Naive thymus-derived CD4-positive, alpha-beta T cell (primary cell): ENCODE measurements at regions of chr12 and their contacts with region 1.

Region 1: GRCh38 chr12:55955800-55956508 is 9.9 kb downstream of the PMEL start:
- DNase-seq: peak in 4 of 9 donors; percentile 41 to 47 (median 44)
- ATAC-seq: peak; percentile 71
- H3K4me3 ChIP-seq: no peak overlapping the region
- H3K4me3 Mint-ChIP-seq: peak overlapping the region in 1 of 10 donors; percentile 21
- H3K27ac ChIP-seq: peak overlapping the region; percentile 22
- H3K27ac Mint-ChIP-seq: peak overlapping the region; percentile 6 to 90 (median 78)
- H3K4me1 ChIP-seq: peaks cover 4 to 8% of the 10 kb centered on the region in 2 donors
- H3K4me1 Mint-ChIP-seq: peaks cover 12 to 38% (median 21%) of the 10 kb centered on the region in 7 donors
- H3K27me3 ChIP-seq: no peaks in the 10 kb centered on the region
- H3K27me3 Mint-ChIP-seq: no peaks in the 10 kb centered on the region

Region 2: GRCh38 chr12:55940065-55940732 is 15.8 kb before region 1 on chr12:
- CTCF ChIA-PET with region 1: interaction called, 5 read pairs
- POLR2A ChIA-PET with region 1: interaction called, 728 read pairs
- intact Hi-C with region 1: loop called in 1 of 2 experiments (anchors 2 kb)
- DNase-seq: peak; percentile 62 to 88 (median 82)
- ATAC-seq: peak; percentile 98
- H3K4me3 ChIP-seq: no peak overlapping the region
- H3K4me3 Mint-ChIP-seq: peak overlapping the region; percentile 57 to 99 (median 72)
- H3K27ac ChIP-seq: peak overlapping the region; percentile 64
- H3K27ac Mint-ChIP-seq: peak overlapping the region; percentile 55 to 100 (median 97)
- H3K4me1 ChIP-seq: peaks cover 16 to 63% of the 10 kb centered on the region in 2 donors
- H3K4me1 Mint-ChIP-seq: peaks cover 65 to 98% (median 93%) of the 10 kb centered on the region in 7 donors
- H3K27me3 ChIP-seq: no peaks in the 10 kb centered on the region
- H3K27me3 Mint-ChIP-seq: no peaks in the 10 kb centered on the region

Region 3: GRCh38 chr12:55966408-55967281 is 10.7 kb after region 1 on chr12 and contains the start of gene CDK2:
- CTCF ChIA-PET with region 1: no interaction called
- POLR2A ChIA-PET with region 1: interaction called, 50 read pairs
- intact Hi-C with region 1: loop called in 1 of 2 experiments (anchors 1 kb)
- DNase-seq: peak; percentile 70 to 95 (median 79)
- ATAC-seq: peak; percentile 99
- H3K4me3 ChIP-seq: peak within 1 kb of the TSS; percentile 73
- H3K4me3 Mint-ChIP-seq: peak within 1 kb of the TSS; percentile 88 to 97 (median 92)
- H3K27ac ChIP-seq: peak within 1 kb of the TSS; percentile 69
- H3K27ac Mint-ChIP-seq: peak within 1 kb of the TSS; percentile 61 to 94 (median 86)
- H3K4me1 ChIP-seq: peaks cover 12 to 18% of the 10 kb centered on the region in 2 donors
- H3K4me1 Mint-ChIP-seq: peaks cover 19 to 51% (median 33%) of the 10 kb centered on the region in 7 donors
- H3K27me3 ChIP-seq: no peaks in the 10 kb centered on the region
- H3K27me3 Mint-ChIP-seq: no peaks in the 10 kb centered on the region
- total RNA-seq, gene CDK2: 19.0 to 77.2 (median 24.1) TPM